ENCODE measurements at regions of chr1 and their contacts with region 1.

Region 1: GRCh38 chr1:64469977-64470664 is at the start of gene CACHD1:
- DNase-seq: peak; percentile 28
- H3K4me3 Mint-ChIP-seq: peak within 1 kb of the TSS; percentile 80
- H3K27ac Mint-ChIP-seq: peak within 1 kb of the TSS; percentile 23
- H3K4me1 Mint-ChIP-seq: peaks cover 11% of the 10 kb centered on the region
- H3K27me3 Mint-ChIP-seq: peaks cover 54% of the 10 kb centered on the region
- total RNA-seq, gene CACHD1: 0.10 and 0.13 TPM in 2 replicates

Region 2: DNA sequence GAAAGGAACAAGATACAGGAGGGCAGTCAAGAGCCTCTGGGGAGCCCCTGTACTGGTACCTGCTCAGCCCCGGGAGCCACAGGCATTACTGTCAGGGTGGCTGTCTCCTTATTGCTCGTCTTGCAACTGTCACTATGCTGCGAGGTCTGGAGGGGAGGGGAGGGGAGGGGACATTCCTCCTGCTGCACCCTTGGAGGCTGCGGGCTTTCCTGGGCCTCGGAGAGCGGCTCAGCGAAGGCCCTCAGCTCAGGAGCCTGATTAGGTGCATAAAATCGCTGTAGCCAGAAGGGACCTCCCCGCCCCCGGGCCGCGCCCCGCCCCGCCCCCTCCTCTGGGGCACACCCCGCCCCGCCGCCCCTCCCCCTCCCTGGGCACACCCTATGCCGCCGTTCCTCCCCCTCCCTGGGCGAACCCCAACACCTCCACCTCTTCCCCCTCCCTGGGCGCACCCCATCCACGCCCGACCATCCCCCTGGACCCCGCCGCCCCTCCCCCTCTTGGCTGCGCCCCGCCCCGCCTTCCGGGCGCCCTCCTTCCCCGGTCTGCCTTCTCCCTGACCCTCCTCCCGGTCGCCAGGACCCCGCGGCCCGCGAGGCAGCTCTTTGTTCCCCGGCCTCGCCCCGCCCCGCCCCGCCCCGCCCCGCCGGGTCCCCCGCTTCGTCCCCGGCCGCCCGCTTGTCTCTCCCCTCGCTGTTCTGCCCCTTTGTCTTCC is 35.3 kb after region 1 on chr1:
- intact Hi-C with region 1: loop called (anchors 5 kb)
- DNase-seq: no peak
- H3K4me3 Mint-ChIP-seq: peak overlapping the region; percentile 86
- H3K27ac Mint-ChIP-seq: no peak overlapping the region
- H3K4me1 Mint-ChIP-seq: peaks cover 17% of the 10 kb centered on the region
- H3K27me3 Mint-ChIP-seq: peaks cover 25% of the 10 kb centered on the region

Region 3: GRCh38 chr1:64519901-64520300 is 49.8 kb after region 1 on chr1:
- intact Hi-C with region 1: no loop called
- DNase-seq: no peak
- H3K4me3 Mint-ChIP-seq: no peak overlapping the region
- H3K27ac Mint-ChIP-seq: no peak overlapping the region
- H3K4me1 Mint-ChIP-seq: no peaks in the 10 kb centered on the region
- H3K27me3 Mint-ChIP-seq: peaks cover 3% of the 10 kb centered on the region

Region 4: DNA sequence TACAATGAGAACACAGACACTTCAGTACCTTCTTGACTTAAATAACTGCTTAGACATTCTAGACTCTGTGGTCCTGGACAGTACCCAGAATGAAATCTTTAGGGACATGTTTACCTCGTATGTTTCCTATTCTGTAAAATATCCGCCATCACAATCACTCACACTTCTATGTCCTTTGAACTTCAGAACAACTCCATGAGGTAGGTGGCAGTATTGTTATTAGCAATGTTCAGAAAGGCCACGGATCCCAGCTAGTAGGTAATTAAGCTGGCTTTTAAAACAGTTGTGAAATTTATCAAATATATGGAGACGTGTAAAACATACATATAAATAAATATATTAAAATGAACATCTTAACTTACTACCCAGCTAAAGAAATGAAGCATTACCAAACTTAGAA is 83.2 kb after region 1 on chr1:
- intact Hi-C with region 1: loop called (anchors 5 kb)
- DNase-seq: no peak
- H3K4me3 Mint-ChIP-seq: no peak overlapping the region
- H3K27ac Mint-ChIP-seq: no peak overlapping the region
- H3K4me1 Mint-ChIP-seq: peaks cover 12% of the 10 kb centered on the region
- H3K27me3 Mint-ChIP-seq: peaks cover 48% of the 10 kb centered on the region

Region 5: GRCh38 chr1:64675718-64676345 is 205.7 kb after region 1 on chr1:
- intact Hi-C with region 1: loop called (anchors 5 kb)
- DNase-seq: no peak
- H3K4me3 Mint-ChIP-seq: no peak overlapping the region
- H3K27ac Mint-ChIP-seq: no peak overlapping the region
- H3K4me1 Mint-ChIP-seq: no peaks in the 10 kb centered on the region
- H3K27me3 Mint-ChIP-seq: peaks cover 2% of the 10 kb centered on the region

Region 6: GRCh38 chr1:64811131-64811530 is 341.0 kb after region 1 on chr1:
- intact Hi-C with region 1: no loop called
- DNase-seq: no peak
- H3K4me3 Mint-ChIP-seq: no peak overlapping the region
- H3K27ac Mint-ChIP-seq: no peak overlapping the region
- H3K4me1 Mint-ChIP-seq: no peaks in the 10 kb centered on the region
- H3K27me3 Mint-ChIP-seq: peaks cover 1% of the 10 kb centered on the region